ENCODE measurements at regions of chr3 and their contacts with region 1.

Region 1: DNA sequence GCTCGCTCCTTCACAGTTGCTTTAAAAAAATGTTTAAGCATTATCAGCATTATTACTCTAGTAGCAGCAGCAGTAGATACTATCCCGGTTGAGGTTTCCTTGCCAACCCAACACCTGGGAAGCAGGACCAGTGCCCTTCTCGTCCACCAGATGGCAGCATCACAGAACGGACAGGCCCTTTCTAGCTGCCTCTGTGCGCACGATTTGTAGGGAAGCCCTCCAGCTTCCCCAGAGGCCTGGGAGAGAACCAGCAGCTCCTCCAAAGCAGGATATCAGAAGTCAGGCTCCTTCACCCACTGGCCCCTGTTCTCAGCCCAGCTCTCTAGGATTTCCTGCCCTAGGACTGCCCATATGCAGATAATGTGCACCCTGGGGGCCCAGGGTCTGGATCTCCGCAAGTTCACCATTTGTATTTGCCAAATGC is 16.8 kb upstream of the ESYT3 start:
- DNase-seq: peak; percentile 85
- H3K4me3 Mint-ChIP-seq: no peak overlapping the region
- H3K27ac Mint-ChIP-seq: no peak overlapping the region
- H3K4me1 Mint-ChIP-seq: no peaks in the 10 kb centered on the region
- H3K27me3 Mint-ChIP-seq: no peaks in the 10 kb centered on the region
- CTCF ChIP-seq: peak; percentile 84

Region 2: GRCh38 chr3:138329127-138329983 is 88.2 kb before region 1 on chr3 and contains the start of gene NME9:
- CTCF ChIA-PET with region 1: interaction called, 20 read pairs
- POLR2A ChIA-PET with region 1: no interaction called
- intact Hi-C with region 1: loop called (anchors 5 kb)
- DNase-seq: peak; percentile 76
- H3K4me3 Mint-ChIP-seq: peak within 1 kb of the TSS; percentile 69
- H3K27ac Mint-ChIP-seq: peak within 1 kb of the TSS; percentile 13
- H3K4me1 Mint-ChIP-seq: peaks cover 8% of the 10 kb centered on the region
- H3K27me3 Mint-ChIP-seq: no peaks in the 10 kb centered on the region
- CTCF ChIP-seq: peak; percentile 37
- total RNA-seq, gene NME9: not detected in 2 replicates

Region 3: DNA sequence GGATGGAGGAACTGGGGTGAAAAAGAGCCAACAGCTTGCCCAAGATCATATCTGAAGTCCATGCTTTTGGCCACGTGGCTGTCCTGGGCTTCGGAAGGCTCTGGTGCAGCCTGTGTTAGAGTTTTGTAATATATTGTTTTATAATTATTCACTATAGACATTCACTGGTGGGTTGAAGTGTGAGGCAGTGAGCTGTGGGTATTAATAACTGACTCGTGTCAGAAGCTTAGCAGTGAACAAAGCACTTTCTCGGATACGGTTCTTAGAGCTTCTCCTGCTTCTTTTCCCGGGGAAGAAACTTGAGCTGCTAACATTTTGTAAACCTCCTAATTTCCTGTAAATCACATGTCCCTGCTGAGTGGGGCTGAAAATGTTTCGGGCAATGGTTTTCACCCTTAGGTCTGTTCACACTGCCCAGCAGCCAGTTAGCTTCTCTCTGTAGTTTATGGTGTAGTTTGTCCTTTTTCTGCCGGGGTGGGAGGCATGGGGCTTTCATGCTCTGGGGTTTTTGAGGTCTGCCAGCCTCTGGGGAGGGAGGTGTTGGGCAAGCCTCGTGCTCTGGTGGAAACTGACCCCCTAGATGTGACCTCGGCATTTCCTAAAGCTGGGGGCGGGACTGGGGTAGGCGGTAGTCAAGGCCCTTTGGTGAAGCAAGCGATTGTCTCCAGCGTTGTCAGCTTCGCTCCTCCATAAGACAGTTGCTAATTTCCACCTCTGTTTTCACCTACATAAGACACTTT is 67.5 kb before region 1 on chr3:
- CTCF ChIA-PET with region 1: interaction called, 12 read pairs
- POLR2A ChIA-PET with region 1: no interaction called
- intact Hi-C with region 1: no loop called
- DNase-seq: no peak
- H3K4me3 Mint-ChIP-seq: no peak overlapping the region
- H3K27ac Mint-ChIP-seq: no peak overlapping the region
- H3K4me1 Mint-ChIP-seq: peaks cover 5% of the 10 kb centered on the region
- H3K27me3 Mint-ChIP-seq: no peaks in the 10 kb centered on the region
- CTCF ChIP-seq: no peak

Region 4: DNA sequence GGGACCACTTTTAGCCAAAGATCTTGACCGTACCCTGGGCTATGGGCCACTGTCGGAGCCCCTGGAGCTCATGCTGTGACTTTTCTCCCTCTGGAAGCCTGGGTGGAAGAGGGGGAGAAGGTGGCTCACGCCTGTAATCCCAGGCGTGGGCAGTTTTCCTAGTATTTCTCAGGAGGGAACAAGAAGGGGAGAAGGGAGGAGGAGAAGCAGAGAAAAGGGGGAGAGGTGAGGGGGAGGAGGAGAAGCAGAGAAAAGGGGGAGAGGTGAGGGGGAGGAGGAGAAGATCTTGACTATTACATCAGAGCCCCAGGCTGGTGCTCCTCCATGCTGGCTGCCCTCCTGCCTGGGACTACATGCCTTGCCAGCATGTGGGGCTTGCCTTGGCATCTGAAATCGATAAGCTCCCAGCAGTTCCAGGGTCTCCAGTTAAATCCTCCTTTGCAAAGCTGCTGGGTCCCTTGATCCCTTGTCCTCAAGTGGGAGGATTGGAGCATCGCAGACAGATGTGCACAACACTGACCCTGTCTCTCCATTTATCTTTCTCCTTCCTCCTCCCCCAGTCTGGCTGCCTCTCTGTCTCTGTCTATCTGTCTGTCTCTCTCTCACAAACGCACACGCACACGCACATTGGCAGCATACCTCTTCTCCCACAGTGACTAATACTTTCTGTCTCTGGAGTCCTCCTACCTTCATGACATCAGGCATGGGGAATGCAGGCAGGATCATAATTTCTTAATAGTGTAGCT is 27.6 kb before region 1 on chr3:
- CTCF ChIA-PET with region 1: interaction called, 21 read pairs
- POLR2A ChIA-PET with region 1: no interaction called
- intact Hi-C with region 1: no loop called
- DNase-seq: peak; percentile 92
- H3K4me3 Mint-ChIP-seq: peak overlapping the region; percentile 26
- H3K27ac Mint-ChIP-seq: peak overlapping the region; percentile 7
- H3K4me1 Mint-ChIP-seq: peaks cover 14% of the 10 kb centered on the region
- H3K27me3 Mint-ChIP-seq: no peaks in the 10 kb centered on the region
- CTCF ChIP-seq: no peak

Region 5: GRCh38 chr3:138434276-138434874 is 16.8 kb after region 1 on chr3 and contains the start of gene ESYT3:
- CTCF ChIA-PET with region 1: interaction called, 50 read pairs
- POLR2A ChIA-PET with region 1: no interaction called
- intact Hi-C with region 1: no loop called
- DNase-seq: peak; percentile 66
- H3K4me3 Mint-ChIP-seq: peak within 1 kb of the TSS; percentile 65
- H3K27ac Mint-ChIP-seq: no peak within 1 kb of the TSS
- H3K4me1 Mint-ChIP-seq: no peaks in the 10 kb centered on the region
- H3K27me3 Mint-ChIP-seq: peaks cover 12% of the 10 kb centered on the region
- CTCF ChIP-seq: no peak
- total RNA-seq, gene ESYT3: 0.44 and 1.0 TPM in 2 replicates

Region 6: DNA sequence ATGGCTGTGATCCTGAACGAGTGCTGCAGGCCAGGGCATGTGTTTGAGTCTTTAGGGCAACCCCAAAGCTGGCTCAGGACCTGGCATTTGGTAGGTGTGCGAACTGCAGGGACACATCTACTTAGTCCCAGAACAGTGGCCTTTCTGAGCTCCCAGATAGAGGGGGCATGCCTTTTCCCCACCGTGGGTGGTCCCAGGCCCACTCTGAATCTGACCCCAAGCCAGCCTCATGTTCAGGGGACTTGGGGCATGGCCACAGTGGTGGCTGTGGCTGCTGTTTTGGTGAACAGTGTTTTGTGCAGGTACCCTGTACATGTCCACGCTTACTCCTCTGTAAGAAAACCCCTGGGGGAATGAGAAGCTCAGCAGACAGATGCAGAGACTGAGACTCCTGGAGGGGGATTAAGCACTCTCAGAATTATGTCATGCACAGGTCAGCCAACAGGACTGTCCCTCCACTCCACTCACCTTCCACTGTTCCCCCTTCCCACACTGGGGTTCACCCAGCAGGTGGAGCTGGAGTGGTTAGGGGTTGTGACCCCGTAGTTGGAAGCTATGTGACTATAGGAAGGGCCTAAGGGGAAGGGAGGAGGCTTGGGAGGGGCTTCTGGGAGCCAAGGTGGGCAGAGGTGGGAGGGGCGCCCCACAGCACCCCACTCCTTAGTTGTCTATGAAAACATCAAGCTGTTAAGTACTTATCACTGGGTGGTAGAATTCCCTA is 33.3 kb after region 1 on chr3:
- CTCF ChIA-PET with region 1: interaction called, 12 read pairs
- POLR2A ChIA-PET with region 1: no interaction called
- intact Hi-C with region 1: no loop called
- DNase-seq: no peak
- H3K4me3 Mint-ChIP-seq: no peak overlapping the region
- H3K27ac Mint-ChIP-seq: no peak overlapping the region
- H3K4me1 Mint-ChIP-seq: peaks cover 6% of the 10 kb centered on the region
- H3K27me3 Mint-ChIP-seq: no peaks in the 10 kb centered on the region
- CTCF ChIP-seq: no peak

Region 7: GRCh38 chr3:138694287-138695007 is 276.9 kb after region 1 on chr3:
- CTCF ChIA-PET with region 1: interaction called, 3 read pairs
- POLR2A ChIA-PET with region 1: no interaction called
- intact Hi-C with region 1: loop called (anchors 1 kb)
- DNase-seq: peak; percentile 80
- H3K4me3 Mint-ChIP-seq: peak overlapping the region; percentile 2
- H3K27ac Mint-ChIP-seq: peak overlapping the region; percentile 43
- H3K4me1 Mint-ChIP-seq: peaks cover 8% of the 10 kb centered on the region
- H3K27me3 Mint-ChIP-seq: no peaks in the 10 kb centered on the region
- CTCF ChIP-seq: no peak